ENCODE measurements at regions of chr10 and their contacts with region 1.

Region 1: GRCh38 chr10:124688889-124689670 is 55.1 kb downstream of the FAM53B start:
- DNase-seq: peak; percentile 82 to 84
- ATAC-seq: peak; percentile 35 to 51
- H3K4me3 ChIP-seq: no peak overlapping the region
- H3K27ac ChIP-seq: peak overlapping the region; percentile 81 to 98 (median 95)
- H3K4me1 ChIP-seq: peaks cover 80 to 95% of the 10 kb centered on the region in 2 donors
- H3K27me3 ChIP-seq: no peaks in the 10 kb centered on the region
- CTCF ChIP-seq: no peak
- POLR2A ChIP-seq: peak in 1 of 2 donors; percentile 31

Region 2: GRCh38 chr10:124240839-124241291 is 448.2 kb before region 1 on chr10:
- in situ Hi-C with region 1: no loop called
- intact Hi-C with region 1: no loop called
- DNase-seq: peak in 1 of 2 donors; percentile 2
- ATAC-seq: no peak
- H3K4me3 ChIP-seq: no peak overlapping the region
- H3K27ac ChIP-seq: no peak overlapping the region
- H3K4me1 ChIP-seq: no peaks in the 10 kb centered on the region
- H3K27me3 ChIP-seq: no peaks in the 10 kb centered on the region
- CTCF ChIP-seq: no peak
- POLR2A ChIP-seq: no peak

Region 3: DNA sequence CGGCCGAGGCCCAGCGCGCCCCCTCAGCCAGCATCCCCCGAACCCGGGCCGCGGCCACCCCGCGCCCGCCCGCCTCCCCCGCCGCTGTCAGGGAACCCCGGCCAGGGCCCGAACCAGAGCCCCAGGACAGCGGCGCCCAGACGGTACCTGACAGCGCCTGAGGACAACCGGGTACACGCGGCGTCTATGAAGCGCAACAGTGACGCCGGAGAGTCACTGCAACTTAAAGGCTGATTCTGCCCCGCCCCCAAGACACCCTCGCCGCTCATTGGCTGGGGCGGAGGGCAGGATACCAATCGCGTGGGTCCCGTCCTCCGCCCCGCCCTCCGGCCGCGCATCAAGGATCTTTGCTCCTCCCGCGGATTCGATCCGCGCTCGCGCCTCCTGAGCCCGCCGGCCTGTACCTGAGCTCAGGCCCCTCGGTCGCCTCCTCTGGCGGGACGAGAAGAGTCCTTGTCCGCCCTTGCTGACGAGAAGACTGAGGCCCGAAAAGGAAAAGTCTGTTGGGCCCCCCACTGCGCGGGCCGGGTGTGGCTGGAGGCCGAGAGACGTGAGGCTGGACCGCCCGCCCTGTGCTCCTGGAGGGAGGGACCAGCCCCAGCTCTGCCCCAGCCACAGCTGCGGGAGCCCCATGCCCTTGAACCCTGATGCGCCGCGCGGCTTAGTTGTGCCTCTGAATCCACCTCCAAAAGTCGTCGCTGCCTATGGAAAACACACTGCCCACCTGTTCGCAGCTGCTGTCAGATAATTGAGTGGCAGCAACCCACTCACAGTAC is 270.2 kb before region 1 on chr10 and contains the start of gene OAT:
- in situ Hi-C with region 1: no loop called
- intact Hi-C with region 1: loop called (anchors 5 kb)
- DNase-seq: peak; percentile 94 to 95
- ATAC-seq: peak; percentile 93
- H3K4me3 ChIP-seq: peak within 1 kb of the TSS; percentile 67 to 86 (median 76)
- H3K27ac ChIP-seq: peak within 1 kb of the TSS; percentile 81 to 95 (median 94)
- H3K4me1 ChIP-seq: peaks cover 31 to 42% of the 10 kb centered on the region in 2 donors
- H3K27me3 ChIP-seq: no peaks in the 10 kb centered on the region
- CTCF ChIP-seq: no peak
- POLR2A ChIP-seq: peak; percentile 98 to 99
- total RNA-seq, gene OAT: 20.1 to 97.2 (median 42.6) TPM

Region 4: GRCh38 chr10:124560377-124561105 is 128.5 kb before region 1 on chr10:
- in situ Hi-C with region 1: no loop called
- intact Hi-C with region 1: loop called (anchors 5 kb)
- DNase-seq: peak; percentile 87 to 93
- ATAC-seq: peak; percentile 85 to 93
- H3K4me3 ChIP-seq: peak overlapping the region in 2 of 4 donors; percentile 18 to 25
- H3K27ac ChIP-seq: peak overlapping the region; percentile 94 to 99 (median 95)
- H3K4me1 ChIP-seq: peaks cover 50 to 68% of the 10 kb centered on the region in 2 donors
- H3K27me3 ChIP-seq: no peaks in the 10 kb centered on the region
- CTCF ChIP-seq: no peak
- POLR2A ChIP-seq: peak; percentile 29 to 68

Region 5: GRCh38 chr10:124827474-124827873 is 138.4 kb after region 1 on chr10:
- in situ Hi-C with region 1: no loop called
- intact Hi-C with region 1: no loop called
- DNase-seq: no peak
- ATAC-seq: no peak
- H3K4me3 ChIP-seq: no peak overlapping the region
- H3K27ac ChIP-seq: no peak overlapping the region
- H3K4me1 ChIP-seq: peaks cover 6 to 8% of the 10 kb centered on the region in 2 donors
- H3K27me3 ChIP-seq: no peaks in the 10 kb centered on the region
- CTCF ChIP-seq: peak in 4 of 5 experiments; percentile 34 to 62 (median 58)
- POLR2A ChIP-seq: no peak

Region 6: GRCh38 chr10:124867304-124867703 is 178.2 kb after region 1 on chr10:
- in situ Hi-C with region 1: no loop called
- intact Hi-C with region 1: no loop called
- DNase-seq: no peak
- ATAC-seq: no peak
- H3K4me3 ChIP-seq: no peak overlapping the region
- H3K27ac ChIP-seq: no peak overlapping the region
- H3K4me1 ChIP-seq: peaks cover 6 to 11% of the 10 kb centered on the region in 2 donors
- H3K27me3 ChIP-seq: no peaks in the 10 kb centered on the region
- CTCF ChIP-seq: no peak
- POLR2A ChIP-seq: no peak

Measured in gastrocnemius medialis (tissue), 4 donors.